ENCODE measurements at regions of chr12 and their contacts with region 1.

Region 1: GRCh38 chr12:109377139-109377685 is 29.5 kb downstream of the MYO1H start:
- DNase-seq: no peak
- H3K4me3 Mint-ChIP-seq: no peak overlapping the region
- H3K27ac Mint-ChIP-seq: no peak overlapping the region
- H3K4me1 Mint-ChIP-seq: no peaks in the 10 kb centered on the region
- H3K27me3 Mint-ChIP-seq: peaks cover 15% of the 10 kb centered on the region

Region 2: GRCh38 chr12:109393437-109394345 is 16.5 kb after region 1 on chr12:
- CTCF ChIA-PET with region 1: interaction called, 11 read pairs
- DNase-seq: peak; percentile 54
- H3K4me3 Mint-ChIP-seq: no peak overlapping the region
- H3K27ac Mint-ChIP-seq: no peak overlapping the region
- H3K4me1 Mint-ChIP-seq: no peaks in the 10 kb centered on the region
- H3K27me3 Mint-ChIP-seq: peaks cover 21% of the 10 kb centered on the region

Measured in activated naive CD4-positive, alpha-beta T cell treated with anti-CD3 and anti-CD28 coated beads, Interleukin-2, amount 10 ng/mL, durations not matched to agents 7 days and 5 days (primary cell).